ENCODE measurements at regions of chr2 and their contacts with region 1.

Region 1: DNA sequence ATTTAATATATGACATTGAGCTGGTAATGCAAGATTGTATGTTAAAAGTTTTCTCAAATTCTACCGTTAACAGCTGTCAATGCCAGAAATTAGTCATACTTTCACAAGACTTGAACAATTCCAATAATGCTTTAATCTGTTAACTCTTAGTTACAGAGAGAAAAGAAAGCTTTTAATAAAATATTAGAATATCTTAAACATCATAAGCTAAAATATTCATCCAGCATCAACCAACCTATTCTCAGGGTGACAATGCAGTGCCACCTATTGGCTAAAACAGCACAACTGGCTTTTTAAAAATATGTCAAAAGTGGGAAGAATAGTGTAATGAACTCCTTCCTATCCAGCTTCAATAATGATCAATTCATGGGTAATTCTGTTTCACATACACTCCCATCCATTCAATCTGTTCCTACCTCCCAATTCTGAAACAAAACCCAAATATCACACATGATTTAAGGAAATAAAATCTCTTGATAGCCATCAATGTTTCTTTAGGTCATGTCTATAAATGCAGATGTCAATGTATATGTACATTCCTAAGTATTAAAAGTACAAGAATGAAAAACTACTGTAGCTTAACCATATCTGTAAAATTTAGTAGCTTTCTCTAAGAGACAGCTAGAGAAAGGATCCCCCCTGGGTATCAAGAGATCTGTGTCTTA is 79.8 kb upstream of the CCDC141 start:
- DNase-seq: peak; percentile 35
- H3K4me3 Mint-ChIP-seq: no peak overlapping the region
- H3K27ac Mint-ChIP-seq: no peak overlapping the region
- H3K4me1 Mint-ChIP-seq: no peaks in the 10 kb centered on the region
- H3K27me3 Mint-ChIP-seq: no peaks in the 10 kb centered on the region

Region 2: GRCh38 chr2:178761759-178762371 is 367.8 kb before region 1 on chr2:
- CTCF ChIA-PET with region 1: interaction called, 7 read pairs
- intact Hi-C with region 1: loop called (anchors 1 kb)
- DNase-seq: peak; percentile 51
- H3K4me3 Mint-ChIP-seq: no peak overlapping the region
- H3K27ac Mint-ChIP-seq: no peak overlapping the region
- H3K4me1 Mint-ChIP-seq: no peaks in the 10 kb centered on the region
- H3K27me3 Mint-ChIP-seq: no peaks in the 10 kb centered on the region

Region 3: GRCh38 chr2:178891265-178891958 is 238.3 kb before region 1 on chr2:
- CTCF ChIA-PET with region 1: interaction called, 34 read pairs
- intact Hi-C with region 1: loop called (anchors 1 kb)
- DNase-seq: peak; percentile 82
- H3K4me3 Mint-ChIP-seq: no peak overlapping the region
- H3K27ac Mint-ChIP-seq: no peak overlapping the region
- H3K4me1 Mint-ChIP-seq: peaks cover 9% of the 10 kb centered on the region
- H3K27me3 Mint-ChIP-seq: no peaks in the 10 kb centered on the region

Region 4: DNA sequence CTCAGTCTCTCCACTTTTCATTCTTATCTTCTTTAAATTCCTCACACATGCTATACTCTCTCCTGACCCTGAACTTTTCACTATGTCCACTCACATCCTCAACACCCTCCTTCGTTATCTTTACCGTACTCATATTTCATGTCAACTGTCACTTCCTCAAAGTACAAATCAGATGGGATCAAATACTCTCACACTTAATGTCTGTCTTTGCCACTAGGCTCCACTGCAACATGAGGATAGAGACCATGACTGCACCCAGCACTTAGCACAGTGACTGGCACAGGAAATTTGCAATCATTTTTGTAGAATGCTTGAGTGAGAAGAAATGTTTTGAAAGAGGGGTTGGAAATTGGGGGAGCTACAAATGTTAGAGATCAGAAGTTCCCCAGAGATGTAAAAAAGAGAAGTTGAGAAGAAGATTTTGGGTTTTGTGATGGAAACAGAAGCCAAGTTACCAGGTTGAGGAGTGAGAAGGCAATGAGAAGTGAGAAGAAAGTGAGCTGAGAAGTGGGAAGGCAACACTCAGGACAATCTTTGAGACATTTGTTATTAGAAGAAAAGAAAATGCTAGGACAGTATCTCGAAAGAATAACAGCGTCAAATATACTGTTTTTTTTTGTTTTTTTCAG is 166.8 kb before region 1 on chr2:
- CTCF ChIA-PET with region 1: interaction called, 5 read pairs
- intact Hi-C with region 1: loop called (anchors 2 kb)
- DNase-seq: no peak
- H3K4me3 Mint-ChIP-seq: no peak overlapping the region
- H3K27ac Mint-ChIP-seq: no peak overlapping the region
- H3K4me1 Mint-ChIP-seq: no peaks in the 10 kb centered on the region
- H3K27me3 Mint-ChIP-seq: no peaks in the 10 kb centered on the region

Region 5: DNA sequence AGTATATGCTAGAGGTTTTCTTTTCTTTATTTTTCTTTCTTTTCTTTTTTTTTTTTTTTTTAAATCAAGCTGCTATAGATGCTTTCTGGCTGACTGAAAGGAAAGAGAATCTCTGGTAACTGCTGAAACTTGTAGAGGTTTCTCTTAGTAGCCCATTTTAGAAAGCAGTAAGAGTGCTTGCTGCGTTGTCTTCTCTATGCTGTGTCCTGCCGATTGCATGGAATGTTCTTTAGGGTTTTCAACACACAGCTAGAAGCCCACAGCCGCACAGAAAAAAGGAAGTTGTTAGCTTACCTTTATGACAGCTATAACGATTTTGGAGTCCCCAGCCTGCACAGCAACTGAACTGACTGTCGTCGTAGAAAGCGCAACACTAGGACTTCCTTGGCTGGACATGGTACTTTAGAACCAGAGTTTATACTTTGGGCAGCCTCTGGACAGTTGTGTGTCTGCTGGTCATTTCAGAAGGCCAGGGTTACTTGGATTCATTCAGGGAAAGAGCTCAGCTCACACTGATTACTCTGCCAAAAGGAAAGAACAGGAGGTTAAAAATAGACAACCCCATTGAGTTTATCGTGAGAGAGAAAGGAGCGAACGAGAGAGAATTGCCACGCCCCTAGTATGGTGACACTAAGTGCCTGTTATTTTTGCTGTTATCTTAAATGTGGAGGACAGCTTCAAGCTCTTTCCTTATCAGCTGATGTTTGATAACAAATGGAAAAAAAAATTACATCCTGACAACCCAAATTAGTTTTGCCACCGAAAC is 80.0 kb before region 1 on chr2 and contains the start of gene CCDC141:
- CTCF ChIA-PET with region 1: interaction called, 11 read pairs
- intact Hi-C with region 1: no loop called
- DNase-seq: peak; percentile 50
- H3K4me3 Mint-ChIP-seq: peak within 1 kb of the TSS; percentile 86
- H3K27ac Mint-ChIP-seq: peak within 1 kb of the TSS; percentile 81
- H3K4me1 Mint-ChIP-seq: peaks cover 55% of the 10 kb centered on the region
- H3K27me3 Mint-ChIP-seq: no peaks in the 10 kb centered on the region
- total RNA-seq, gene CCDC141: 2.6 to 4.6 TPM

Region 6: GRCh38 chr2:179082697-179083096 is 47.0 kb before region 1 on chr2:
- CTCF ChIA-PET with region 1: no interaction called
- intact Hi-C with region 1: no loop called
- DNase-seq: no peak
- H3K4me3 Mint-ChIP-seq: no peak overlapping the region
- H3K27ac Mint-ChIP-seq: no peak overlapping the region
- H3K4me1 Mint-ChIP-seq: peaks cover 3% of the 10 kb centered on the region
- H3K27me3 Mint-ChIP-seq: no peaks in the 10 kb centered on the region

Region 7: DNA sequence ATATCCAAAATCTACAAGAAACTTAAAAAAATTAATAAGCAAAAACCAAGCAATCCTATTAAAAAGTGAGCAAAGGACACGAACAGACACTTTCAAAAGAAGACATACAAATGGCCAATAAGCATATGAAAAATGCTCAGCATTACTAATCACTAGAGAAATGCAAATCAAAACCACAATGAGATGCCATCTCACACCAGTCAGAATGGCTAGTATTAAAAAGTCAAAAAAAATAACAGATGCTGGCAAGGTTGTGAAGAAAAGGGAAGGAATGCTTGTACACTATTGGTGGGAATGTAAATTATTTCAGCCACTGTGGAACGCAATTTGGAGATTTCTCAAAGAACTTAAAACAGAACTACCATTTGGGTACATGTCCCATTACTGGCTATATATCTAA is 263.8 kb after region 1 on chr2:
- CTCF ChIA-PET with region 1: no interaction called
- intact Hi-C with region 1: no loop called
- DNase-seq: no peak
- H3K4me3 Mint-ChIP-seq: no peak overlapping the region
- H3K27ac Mint-ChIP-seq: no peak overlapping the region
- H3K4me1 Mint-ChIP-seq: no peaks in the 10 kb centered on the region
- H3K27me3 Mint-ChIP-seq: no peaks in the 10 kb centered on the region